Mammary epithelial cell (primary cell): ENCODE measurements at regions of chr10 and their contacts with region 1.

Region 1: DNA sequence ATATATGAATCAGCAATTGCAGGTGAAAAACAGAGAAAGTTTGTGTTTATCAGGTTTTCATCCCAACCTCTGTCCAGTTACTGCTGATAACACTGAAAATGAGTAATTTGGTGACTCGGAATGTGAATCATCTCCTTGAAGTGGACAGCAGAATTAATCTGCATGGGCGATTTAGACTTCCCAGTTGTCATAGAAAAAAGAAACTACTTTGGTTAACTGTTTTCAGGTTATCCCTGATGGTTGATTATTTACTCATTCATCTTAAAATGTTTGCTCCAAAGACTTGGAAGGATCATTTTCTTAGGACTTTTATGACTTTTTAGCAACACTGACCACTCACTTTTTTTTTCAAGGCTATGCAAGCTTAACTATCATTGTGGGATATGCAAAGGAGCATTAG is 504.1 kb upstream of the ANKRD30A start:
- DNase-seq: no peak
- H3K4me3 ChIP-seq: no peak overlapping the region
- H3K27ac ChIP-seq: no peak overlapping the region
- H3K4me1 ChIP-seq: no peaks in the 10 kb centered on the region
- H3K27me3 ChIP-seq: no peaks in the 10 kb centered on the region
- CTCF ChIP-seq: no peak

Region 2: GRCh38 chr10:36581237-36581636 is 40.1 kb before region 1 on chr10:
- CTCF ChIA-PET with region 1: no interaction called
- dilution Hi-C with region 1: loop called (anchors 5 kb)
- in situ Hi-C with region 1: no loop called
- intact Hi-C with region 1: no loop called
- DNase-seq: no peak
- H3K4me3 ChIP-seq: no peak overlapping the region
- H3K27ac ChIP-seq: no peak overlapping the region
- H3K4me1 ChIP-seq: no peaks in the 10 kb centered on the region
- H3K27me3 ChIP-seq: no peaks in the 10 kb centered on the region
- CTCF ChIP-seq: no peak

Region 3: GRCh38 chr10:36634916-36635315 is 13.6 kb after region 1 on chr10:
- CTCF ChIA-PET with region 1: no interaction called
- dilution Hi-C with region 1: no loop called
- in situ Hi-C with region 1: no loop called
- intact Hi-C with region 1: no loop called
- DNase-seq: no peak
- H3K4me3 ChIP-seq: no peak overlapping the region
- H3K27ac ChIP-seq: no peak overlapping the region
- H3K4me1 ChIP-seq: no peaks in the 10 kb centered on the region
- H3K27me3 ChIP-seq: no peaks in the 10 kb centered on the region
- CTCF ChIP-seq: no peak

Region 4: GRCh38 chr10:37067576-37067975 is 446.2 kb after region 1 on chr10:
- CTCF ChIA-PET with region 1: no interaction called
- dilution Hi-C with region 1: no loop called
- in situ Hi-C with region 1: no loop called
- intact Hi-C with region 1: no loop called
- DNase-seq: no peak
- H3K4me3 ChIP-seq: no peak overlapping the region
- H3K27ac ChIP-seq: no peak overlapping the region
- H3K4me1 ChIP-seq: no peaks in the 10 kb centered on the region
- H3K27me3 ChIP-seq: no peaks in the 10 kb centered on the region
- CTCF ChIP-seq: no peak